Tibial artery (tissue), 4 donors: ENCODE measurements at regions of chr1 and their contacts with region 1.

Region 1: GRCh38 chr1:116372587-116373444 is at the start of gene ATP1A1:
- DNase-seq: peak; percentile 97 to 98
- H3K4me3 ChIP-seq: peak within 1 kb of the TSS; percentile 94 to 98
- H3K27ac ChIP-seq: peak within 1 kb of the TSS; percentile 98
- H3K4me1 ChIP-seq: peaks cover 0 to 42% (median 35%) of the 10 kb centered on the region in 4 donors
- H3K27me3 ChIP-seq: no peaks in the 10 kb centered on the region
- CTCF ChIP-seq: peak in 1 of 2 experiments; percentile 5

Region 2: GRCh38 chr1:116168277-116169097 is 204.3 kb before region 1 on chr1:
- intact Hi-C with region 1: loop called (anchors 5 kb)
- DNase-seq: peak; percentile 75 to 89
- H3K4me3 ChIP-seq: peak overlapping the region; percentile 53 to 74
- H3K27ac ChIP-seq: peak overlapping the region; percentile 87 to 95
- H3K4me1 ChIP-seq: peaks cover 0 to 55% (median 49%) of the 10 kb centered on the region in 4 donors
- H3K27me3 ChIP-seq: no peaks in the 10 kb centered on the region
- CTCF ChIP-seq: peak; percentile 94 to 96

Region 3: DNA sequence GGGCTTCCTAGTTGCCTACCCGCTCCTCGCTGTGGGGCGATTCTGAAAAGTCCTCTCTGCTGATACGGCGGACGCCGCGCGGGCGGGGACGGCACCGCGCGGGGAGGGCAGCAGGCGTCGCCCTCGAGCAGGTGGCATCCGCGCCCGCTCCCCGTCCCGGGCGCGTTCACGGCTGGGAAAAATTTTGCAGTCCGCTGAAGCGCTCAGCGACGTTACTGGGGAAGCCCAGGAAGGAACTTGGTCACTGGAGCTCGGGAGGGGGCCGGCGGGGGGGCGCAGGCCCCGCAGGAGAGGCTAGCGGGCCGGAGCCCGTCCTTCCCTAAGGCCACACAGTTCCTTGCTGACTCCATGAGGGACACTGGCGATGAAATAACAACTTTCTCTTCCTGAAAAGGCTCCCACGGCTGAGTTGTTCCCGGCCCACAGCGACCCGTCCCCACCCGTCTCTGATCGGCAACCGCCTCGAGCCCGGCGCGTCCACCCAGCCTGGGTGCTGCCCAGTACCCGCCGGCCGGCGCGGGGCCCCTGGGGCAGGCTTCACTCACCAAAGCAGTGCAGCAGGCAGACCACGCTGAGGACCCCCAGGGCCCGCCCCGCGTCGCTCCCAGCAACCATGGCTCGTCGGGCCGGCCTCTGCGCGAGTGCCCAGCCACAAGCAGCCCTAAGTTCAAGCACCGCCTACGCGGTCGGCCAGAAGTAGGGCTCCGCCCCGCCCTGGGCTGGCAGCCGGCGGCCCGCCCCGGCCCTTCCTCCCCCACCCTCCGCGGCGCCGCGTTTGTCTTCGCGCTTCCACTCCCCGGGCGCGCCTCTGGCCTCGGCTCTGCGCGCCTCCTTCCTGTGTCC is 197.8 kb after region 1 on chr1 and contains the start of gene CD58:
- intact Hi-C with region 1: loop called (anchors 5 kb)
- DNase-seq: peak; percentile 88 to 95
- H3K4me3 ChIP-seq: peak within 1 kb of the TSS; percentile 88 to 90
- H3K27ac ChIP-seq: peak within 1 kb of the TSS; percentile 96
- H3K4me1 ChIP-seq: peaks cover 0 to 47% (median 8%) of the 10 kb centered on the region in 4 donors
- H3K27me3 ChIP-seq: no peaks in the 10 kb centered on the region
- CTCF ChIP-seq: peak; percentile 67 to 82